Activated CD4-positive, alpha-beta T cell treated with anti-CD3 and anti-CD28 coated beads, Interleukin-2, amount 10 ng/mL, durations not matched to agents 24 days and 14 days (primary cell): ENCODE measurements at regions of chr4 and their contacts with region 1.

Region 1: GRCh38 chr4:14856076-14856933 is 146.0 kb upstream of the CPEB2 start:
- DNase-seq: peak; percentile 83
- H3K4me3 Mint-ChIP-seq: peak overlapping the region; percentile 48
- H3K27ac Mint-ChIP-seq: peak overlapping the region; percentile 90
- H3K4me1 Mint-ChIP-seq: peaks cover 19% of the 10 kb centered on the region
- H3K27me3 Mint-ChIP-seq: no peaks in the 10 kb centered on the region

Region 2: DNA sequence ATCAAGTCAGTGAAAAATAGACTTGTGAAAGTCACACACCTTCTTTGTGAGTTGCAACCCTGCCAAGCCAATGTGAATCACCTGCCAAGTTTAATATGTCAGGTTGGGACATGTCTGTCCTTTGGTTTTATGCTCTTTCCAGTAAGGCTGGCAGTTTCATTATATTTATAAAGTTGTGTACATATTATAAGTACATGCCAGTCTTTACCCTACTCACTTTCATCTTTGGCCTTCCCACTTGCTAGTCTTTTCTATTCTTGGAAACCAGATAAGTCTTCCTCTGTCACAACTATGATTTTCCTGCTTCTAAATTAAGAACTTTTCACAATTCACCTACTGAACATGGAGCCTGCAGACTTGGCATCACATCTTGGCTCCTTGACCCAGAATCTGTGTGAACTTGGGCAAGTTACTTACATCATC is 548.1 kb before region 1 on chr4:
- intact Hi-C with region 1: no loop called
- DNase-seq: no peak
- H3K4me3 Mint-ChIP-seq: no peak overlapping the region
- H3K27ac Mint-ChIP-seq: no peak overlapping the region
- H3K4me1 Mint-ChIP-seq: no peaks in the 10 kb centered on the region
- H3K27me3 Mint-ChIP-seq: no peaks in the 10 kb centered on the region

Region 3: GRCh38 chr4:14787894-14788293 is 68.4 kb before region 1 on chr4:
- intact Hi-C with region 1: loop called (anchors 1 kb)
- DNase-seq: peak; percentile 57
- H3K4me3 Mint-ChIP-seq: no peak overlapping the region
- H3K27ac Mint-ChIP-seq: no peak overlapping the region
- H3K4me1 Mint-ChIP-seq: peaks cover 30% of the 10 kb centered on the region
- H3K27me3 Mint-ChIP-seq: no peaks in the 10 kb centered on the region

Region 4: DNA sequence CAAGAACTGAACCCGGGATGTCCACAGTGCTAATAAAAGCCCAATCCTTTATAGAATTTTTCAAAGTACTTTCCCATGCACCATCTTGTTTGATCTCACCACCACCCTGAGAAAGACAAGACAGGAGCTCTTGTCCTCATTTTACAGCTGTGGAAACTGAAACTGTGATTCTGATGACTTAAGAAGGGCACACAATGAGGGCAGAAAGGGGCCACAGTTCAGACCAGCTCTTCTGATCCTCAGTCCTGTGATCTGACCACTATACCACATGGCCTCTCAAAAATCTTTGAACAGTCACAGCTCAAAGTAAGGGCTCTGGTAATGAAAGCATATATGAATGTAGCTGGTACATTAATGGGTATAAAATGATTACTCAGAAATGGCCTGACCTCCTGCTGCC is 18.7 kb after region 1 on chr4:
- intact Hi-C with region 1: loop called (anchors 2 kb)
- DNase-seq: no peak
- H3K4me3 Mint-ChIP-seq: no peak overlapping the region
- H3K27ac Mint-ChIP-seq: no peak overlapping the region
- H3K4me1 Mint-ChIP-seq: peaks cover 25% of the 10 kb centered on the region
- H3K27me3 Mint-ChIP-seq: peaks cover 2% of the 10 kb centered on the region

Region 5: DNA sequence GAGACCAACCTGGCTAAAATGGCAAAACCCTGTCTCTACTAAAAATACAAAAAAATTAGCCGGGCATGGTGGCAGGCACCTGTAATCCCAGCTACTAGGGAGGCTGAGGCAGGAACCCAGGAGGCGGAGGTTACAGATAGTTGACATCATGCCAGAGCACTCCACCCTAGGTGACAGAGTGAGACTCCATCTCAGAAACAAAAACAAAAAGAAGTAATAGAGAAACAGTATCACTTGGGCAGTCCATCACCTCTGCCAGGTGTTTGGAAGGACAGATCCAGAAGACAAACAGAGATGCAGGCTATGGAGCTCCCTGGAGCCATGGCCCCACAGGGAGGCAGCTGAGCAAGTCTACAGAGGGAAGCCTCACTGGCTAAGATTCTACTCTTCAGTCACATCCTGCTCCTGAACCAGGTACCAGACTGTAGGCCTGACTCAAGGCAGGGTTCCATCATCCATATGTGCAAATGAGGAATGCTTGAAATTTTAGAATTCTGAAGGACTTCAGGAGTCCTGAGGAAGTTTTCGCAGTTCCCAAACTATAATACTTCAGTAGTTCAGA is 64.5 kb after region 1 on chr4:
- intact Hi-C with region 1: loop called (anchors 2 kb)
- DNase-seq: peak; percentile 73
- H3K4me3 Mint-ChIP-seq: no peak overlapping the region
- H3K27ac Mint-ChIP-seq: no peak overlapping the region
- H3K4me1 Mint-ChIP-seq: no peaks in the 10 kb centered on the region
- H3K27me3 Mint-ChIP-seq: peaks cover 3% of the 10 kb centered on the region

Region 6: GRCh38 chr4:15118292-15118691 is 262.0 kb after region 1 on chr4:
- intact Hi-C with region 1: no loop called
- DNase-seq: peak; percentile 31
- H3K4me3 Mint-ChIP-seq: no peak overlapping the region
- H3K27ac Mint-ChIP-seq: no peak overlapping the region
- H3K4me1 Mint-ChIP-seq: peaks cover 8% of the 10 kb centered on the region
- H3K27me3 Mint-ChIP-seq: peaks cover 2% of the 10 kb centered on the region

Region 7: DNA sequence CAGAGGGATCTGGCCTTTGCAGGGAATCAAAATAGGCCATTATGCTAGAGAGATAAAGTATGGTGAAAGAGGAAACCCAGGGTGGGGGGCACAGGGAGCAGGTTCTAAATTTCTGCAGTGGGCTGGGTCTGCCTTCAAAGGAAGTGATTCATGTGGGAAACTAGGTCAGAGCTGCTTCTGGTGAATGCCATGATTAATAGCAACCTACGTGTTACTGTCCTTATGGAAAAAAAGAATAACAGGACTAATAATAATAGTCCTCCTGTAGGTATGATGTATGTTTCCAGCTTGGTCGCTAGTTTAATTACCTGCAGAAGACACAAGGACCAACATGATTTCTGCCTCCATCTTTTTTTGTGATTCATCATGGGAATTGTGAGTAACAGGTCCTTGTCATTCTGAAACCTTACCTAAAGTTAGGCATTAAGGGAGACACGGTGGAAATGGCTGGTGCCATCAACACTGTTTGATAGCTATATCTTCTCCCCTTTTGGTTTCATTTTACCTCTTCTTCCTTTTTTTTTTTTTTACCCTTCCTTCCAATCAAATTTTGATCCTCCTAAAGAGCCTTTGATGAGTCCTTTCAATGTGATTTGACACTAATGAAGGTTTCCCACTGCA is 326.4 kb after region 1 on chr4:
- intact Hi-C with region 1: loop called (anchors 10 kb)
- DNase-seq: no peak
- H3K4me3 Mint-ChIP-seq: no peak overlapping the region
- H3K27ac Mint-ChIP-seq: peak overlapping the region; percentile 64
- H3K4me1 Mint-ChIP-seq: peaks cover 9% of the 10 kb centered on the region
- H3K27me3 Mint-ChIP-seq: no peaks in the 10 kb centered on the region